ENCODE measurements at regions of chr11 and their contacts with region 1.

Region 1: GRCh38 chr11:65354265-65355012 is at the start of gene TIGD3:
- DNase-seq: peak; percentile 87 to 98
- H3K4me3 ChIP-seq: peak within 1 kb of the TSS; percentile 79 to 86
- H3K27ac ChIP-seq: peak within 1 kb of the TSS in 1 of 2 donors; percentile 2
- H3K4me1 ChIP-seq: peaks cover 15 to 19% of the 10 kb centered on the region in 2 donors
- H3K27me3 ChIP-seq: no peaks in the 10 kb centered on the region
- CTCF ChIP-seq: no peak
- total RNA-seq, gene TIGD3: not detected

Region 2: GRCh38 chr11:65060913-65061408 is 293.5 kb before region 1 on chr11:
- intact Hi-C with region 1: no loop called
- DNase-seq: no peak
- H3K4me3 ChIP-seq: no peak overlapping the region
- H3K27ac ChIP-seq: no peak overlapping the region
- H3K4me1 ChIP-seq: no peaks in the 10 kb centered on the region
- H3K27me3 ChIP-seq: no peaks in the 10 kb centered on the region
- CTCF ChIP-seq: no peak

Region 3: GRCh38 chr11:65524741-65525545 is 170.5 kb after region 1 on chr11 and contains the start of gene SCYL1:
- intact Hi-C with region 1: loop called (anchors 5 kb)
- DNase-seq: peak in 1 of 2 donors; percentile 86
- H3K4me3 ChIP-seq: peak within 1 kb of the TSS; percentile 70 to 90
- H3K27ac ChIP-seq: peak within 1 kb of the TSS; percentile 83 to 95
- H3K4me1 ChIP-seq: peaks cover 16 to 18% of the 10 kb centered on the region in 2 donors
- H3K27me3 ChIP-seq: no peaks in the 10 kb centered on the region
- CTCF ChIP-seq: no peak
- total RNA-seq, gene SCYL1: 220 TPM